ENCODE measurements at regions of chr4 and their contacts with region 1.

Region 1: GRCh38 chr4:4256799-4257198 is 8.8 kb upstream of the TMEM128 start:
- DNase-seq: no peak
- H3K4me3 ChIP-seq: no peak overlapping the region
- H3K27ac ChIP-seq: peak overlapping the region in 6 of 59 donors; percentile 22 to 99 (median 66)
- H3K27me3 ChIP-seq: no peaks in the 10 kb centered on the region
- CTCF ChIP-seq: no peak

Region 2: DNA sequence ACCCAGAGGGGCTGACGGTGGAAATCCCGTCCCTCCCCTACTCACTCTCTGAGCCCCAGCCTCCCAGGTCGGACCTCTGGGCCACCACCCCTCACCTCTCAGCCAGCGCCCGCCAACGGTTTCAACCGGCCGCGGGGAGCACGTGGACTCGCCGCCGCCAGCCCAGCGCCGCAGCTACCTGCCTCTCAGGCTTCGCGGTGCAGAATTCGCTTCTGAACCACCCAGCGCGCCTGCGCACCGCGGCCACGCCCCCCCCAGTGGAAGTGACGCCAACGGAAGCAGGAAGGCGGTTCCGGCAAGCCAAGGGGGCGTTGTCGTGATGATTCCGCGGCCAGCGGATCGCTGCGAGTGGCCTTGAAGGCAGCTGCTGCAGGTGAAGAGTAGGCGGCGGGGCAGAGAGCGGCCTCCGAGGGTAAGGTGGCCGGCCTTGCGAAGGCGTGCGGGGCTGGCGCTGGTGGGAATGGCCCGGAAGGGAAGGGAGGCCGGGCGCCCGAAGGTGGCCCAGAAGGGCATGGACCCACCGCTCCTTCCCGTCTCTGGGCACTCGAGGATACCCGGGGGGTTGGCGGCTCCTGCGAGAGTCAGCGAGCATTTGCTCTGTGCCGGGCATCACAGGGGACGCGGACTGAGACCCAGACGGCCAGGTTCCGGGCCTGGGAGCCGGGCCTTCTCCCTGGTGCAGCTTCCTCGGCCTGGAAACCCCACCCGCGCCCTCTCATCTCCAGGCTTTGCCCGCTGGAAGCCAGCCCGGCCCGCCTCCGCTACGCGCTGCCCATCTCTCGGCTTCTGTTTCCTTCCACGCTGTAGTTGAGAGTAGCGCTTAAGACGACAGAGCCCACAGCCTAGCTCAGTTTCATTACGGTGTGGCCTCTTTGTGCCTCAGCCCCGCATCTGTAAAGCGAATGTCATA is 33.4 kb after region 1 on chr4 and contains the starts of genes LYAR and ZBTB49:
- intact Hi-C with region 1: loop called in 1 of 2 experiments (anchors 5 kb)
- DNase-seq: peak; percentile 87 to 96 (median 92)
- H3K4me3 ChIP-seq: peak within 1 kb of the TSS; percentile 59 to 100 (median 88)
- H3K27ac ChIP-seq: peak within 1 kb of the TSS in 50 of 59 donors; percentile 1 to 89 (median 64)
- H3K27me3 ChIP-seq: no peaks in the 10 kb centered on the region
- CTCF ChIP-seq: peak in 42 of 56 donors; percentile 9 to 67 (median 42)
- total RNA-seq, gene LYAR: 3.5 to 13.6 (median 7.0) TPM
- total RNA-seq, gene ZBTB49: 4.4 to 19.7 (median 9.2) TPM

Region 3: GRCh38 chr4:4426511-4427477 is 170.0 kb after region 1 on chr4:
- intact Hi-C with region 1: loop called in 1 of 2 experiments (anchors 5 kb)
- DNase-seq: peak in 1 of 10 donors; percentile 30
- H3K4me3 ChIP-seq: no peak overlapping the region
- H3K27ac ChIP-seq: no peak overlapping the region
- H3K27me3 ChIP-seq: no peaks in the 10 kb centered on the region
- CTCF ChIP-seq: no peak

Region 4: GRCh38 chr4:4995103-4995907 is 738.5 kb after region 1 on chr4:
- intact Hi-C with region 1: loop called in 1 of 2 experiments (anchors 10 kb)
- DNase-seq: peak in 9 of 10 donors; percentile 33 to 75 (median 61)
- H3K4me3 ChIP-seq: no peak overlapping the region
- H3K27ac ChIP-seq: no peak overlapping the region
- H3K27me3 ChIP-seq: peaks cover 0 to 8% (median 0%) of the 10 kb centered on the region in 45 donors
- CTCF ChIP-seq: peak; percentile 63 to 94 (median 85)